Activated CD4-positive, alpha-beta memory T cell treated with anti-CD3 and anti-CD28 coated beads for 36 hours (primary cell): ENCODE measurements at regions of chr1 and their contacts with region 1.

Region 1: GRCh38 chr1:153990468-153991150 is at the start of gene RPS27:
- DNase-seq: peak; percentile 93
- H3K4me3 Mint-ChIP-seq: peak within 1 kb of the TSS; percentile 97
- H3K27ac Mint-ChIP-seq: peak within 1 kb of the TSS; percentile 99
- H3K4me1 Mint-ChIP-seq: peaks cover 45% of the 10 kb centered on the region
- H3K27me3 Mint-ChIP-seq: peaks cover 3% of the 10 kb centered on the region
- total RNA-seq, gene RPS27: 1,861 to 1,992 TPM

Region 2: GRCh38 chr1:153670859-153671627 is 319.6 kb before region 1 on chr1 and contains the start of gene ILF2:
- CTCF ChIA-PET with region 1: interaction called, 7 read pairs
- POLR2A ChIA-PET with region 1: interaction called, 3 read pairs
- intact Hi-C with region 1: loop called (anchors 2 kb)
- DNase-seq: peak; percentile 99
- H3K4me3 Mint-ChIP-seq: no peak within 1 kb of the TSS
- H3K27ac Mint-ChIP-seq: no peak within 1 kb of the TSS
- H3K4me1 Mint-ChIP-seq: peaks cover 31% of the 10 kb centered on the region
- H3K27me3 Mint-ChIP-seq: no peaks in the 10 kb centered on the region
- total RNA-seq, gene ILF2: 315 to 323 TPM

Region 3: DNA sequence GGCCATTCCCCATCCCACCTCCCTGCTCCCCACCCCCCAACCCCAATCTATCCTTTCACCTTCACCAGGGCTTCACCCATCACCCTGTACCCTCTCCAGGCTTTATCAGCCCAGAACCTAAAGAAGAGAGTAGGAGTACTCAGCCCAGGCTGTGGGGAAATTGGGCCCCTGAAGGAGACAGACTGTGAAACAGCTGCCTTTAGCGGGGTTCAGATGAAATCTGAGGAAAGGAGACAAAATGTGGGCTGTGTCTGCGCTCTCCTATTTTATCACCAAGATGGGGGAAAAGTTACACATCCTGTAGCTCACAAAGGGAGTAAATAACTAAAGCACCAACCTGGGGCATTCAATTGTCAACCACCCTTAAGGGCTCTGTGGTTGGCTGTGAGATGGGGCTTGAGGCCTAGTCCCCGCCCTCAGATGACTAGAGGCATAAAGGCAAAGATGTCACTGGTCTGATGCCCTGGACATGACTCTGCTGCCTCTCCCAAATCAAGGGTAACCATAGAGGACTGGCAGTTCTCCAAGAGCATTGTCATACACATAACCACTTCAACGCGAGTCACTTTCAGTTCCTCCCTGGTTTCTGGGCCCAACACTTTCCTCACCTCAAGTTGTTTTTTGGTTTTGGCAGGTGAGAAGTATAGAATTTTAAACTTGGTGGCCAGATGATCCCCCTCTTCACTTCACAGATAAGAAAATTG is 185.4 kb before region 1 on chr1:
- CTCF ChIA-PET with region 1: interaction called, 3 read pairs
- POLR2A ChIA-PET with region 1: interaction called, 3 read pairs
- intact Hi-C with region 1: loop called (anchors 2 kb)
- DNase-seq: peak; percentile 87
- H3K4me3 Mint-ChIP-seq: peak overlapping the region; percentile 5
- H3K27ac Mint-ChIP-seq: peak overlapping the region; percentile 81
- H3K4me1 Mint-ChIP-seq: peaks cover 30% of the 10 kb centered on the region
- H3K27me3 Mint-ChIP-seq: no peaks in the 10 kb centered on the region

Region 4: DNA sequence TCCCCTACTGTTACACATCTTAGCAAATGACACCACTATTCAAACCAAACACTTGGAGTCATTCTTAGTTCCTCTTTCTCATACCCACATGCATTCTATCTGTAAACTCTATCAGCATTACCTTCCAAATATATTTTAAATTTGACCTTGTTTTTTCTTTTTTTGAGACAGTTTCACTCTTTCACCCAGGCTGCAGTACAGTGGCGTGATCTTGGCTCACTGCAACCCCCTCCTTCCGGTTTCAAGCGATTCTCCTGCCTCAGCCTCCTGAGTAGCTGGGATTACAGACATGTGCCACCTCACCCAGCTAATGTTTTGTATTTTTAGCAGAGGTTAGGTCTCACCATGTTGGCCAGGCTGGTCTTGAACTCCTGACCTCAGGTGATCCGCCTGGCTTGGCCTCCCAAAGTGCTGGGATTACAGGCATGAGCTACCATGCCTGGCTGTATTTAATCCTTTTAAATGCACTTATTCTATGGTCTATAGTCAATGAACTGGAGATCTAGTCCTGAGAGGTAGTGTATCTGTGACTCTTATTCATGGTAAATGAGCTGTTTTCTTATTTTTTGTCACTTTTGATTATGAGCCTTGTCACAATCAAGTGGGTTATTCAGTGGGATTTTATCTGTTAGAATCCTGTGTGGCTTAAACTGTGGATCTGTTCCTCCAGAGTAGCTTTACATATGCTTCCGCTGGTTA is 141.0 kb before region 1 on chr1:
- CTCF ChIA-PET with region 1: no interaction called
- POLR2A ChIA-PET with region 1: no interaction called
- intact Hi-C with region 1: no loop called
- DNase-seq: peak; percentile 56
- H3K4me3 Mint-ChIP-seq: no peak overlapping the region
- H3K27ac Mint-ChIP-seq: peak overlapping the region; percentile 83
- H3K4me1 Mint-ChIP-seq: peaks cover 35% of the 10 kb centered on the region
- H3K27me3 Mint-ChIP-seq: no peaks in the 10 kb centered on the region

Region 5: DNA sequence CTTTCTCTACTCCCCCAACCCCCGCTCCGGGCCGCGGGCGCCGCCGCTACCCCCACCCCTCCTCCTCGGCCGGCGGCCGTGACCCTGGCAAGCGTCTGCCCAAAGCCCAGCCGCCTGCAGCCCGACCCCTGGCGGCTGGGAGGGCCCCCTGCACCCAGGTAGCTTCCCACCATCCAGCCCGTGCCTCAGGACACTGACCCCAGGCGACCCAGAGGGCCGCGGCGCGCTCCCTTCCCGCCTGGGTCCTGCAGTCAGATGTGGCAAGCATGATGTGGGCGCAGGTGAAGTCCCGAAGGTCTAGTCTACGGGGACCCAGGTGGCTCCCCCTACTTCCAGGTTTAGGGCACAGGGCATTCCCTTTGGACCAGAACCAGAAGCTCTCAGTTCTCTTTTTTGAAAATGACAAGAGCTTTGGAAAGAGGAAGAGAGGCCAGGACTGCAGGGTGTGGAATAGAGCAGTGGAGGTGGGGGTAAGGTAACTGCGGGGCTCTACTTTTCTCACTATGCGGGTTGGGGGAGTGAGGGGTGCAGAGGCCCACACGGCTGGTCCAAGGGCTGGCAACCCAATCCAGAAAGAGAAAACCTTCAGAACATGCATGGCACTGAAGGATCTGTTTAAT is 43.9 kb before region 1 on chr1 and contains the start of gene DENND4B:
- CTCF ChIA-PET with region 1: interaction called, 24 read pairs
- POLR2A ChIA-PET with region 1: interaction called, 23 read pairs
- intact Hi-C with region 1: no loop called
- DNase-seq: peak; percentile 83
- H3K4me3 Mint-ChIP-seq: peak within 1 kb of the TSS; percentile 92
- H3K27ac Mint-ChIP-seq: peak within 1 kb of the TSS; percentile 97
- H3K4me1 Mint-ChIP-seq: peaks cover 25% of the 10 kb centered on the region
- H3K27me3 Mint-ChIP-seq: no peaks in the 10 kb centered on the region
- total RNA-seq, gene DENND4B: 98.1 to 108 TPM

Region 6: GRCh38 chr1:153977250-153978240 is 13.1 kb before region 1 on chr1 and contains the start of gene JTB:
- CTCF ChIA-PET with region 1: interaction called, 34 read pairs
- POLR2A ChIA-PET with region 1: interaction called, 23 read pairs
- intact Hi-C with region 1: loop called (anchors 1 kb)
- DNase-seq: peak; percentile 92
- H3K4me3 Mint-ChIP-seq: peak within 1 kb of the TSS; percentile 90
- H3K27ac Mint-ChIP-seq: peak within 1 kb of the TSS; percentile 97
- H3K4me1 Mint-ChIP-seq: peaks cover 31% of the 10 kb centered on the region
- H3K27me3 Mint-ChIP-seq: no peaks in the 10 kb centered on the region
- total RNA-seq, gene JTB: 134 to 136 TPM

Region 7: GRCh38 chr1:154081386-154082126 is 90.9 kb after region 1 on chr1:
- CTCF ChIA-PET with region 1: no interaction called
- POLR2A ChIA-PET with region 1: no interaction called
- intact Hi-C with region 1: no loop called
- DNase-seq: no peak
- H3K4me3 Mint-ChIP-seq: no peak overlapping the region
- H3K27ac Mint-ChIP-seq: no peak overlapping the region
- H3K4me1 Mint-ChIP-seq: no peaks in the 10 kb centered on the region
- H3K27me3 Mint-ChIP-seq: peaks cover 5% of the 10 kb centered on the region

Region 8: DNA sequence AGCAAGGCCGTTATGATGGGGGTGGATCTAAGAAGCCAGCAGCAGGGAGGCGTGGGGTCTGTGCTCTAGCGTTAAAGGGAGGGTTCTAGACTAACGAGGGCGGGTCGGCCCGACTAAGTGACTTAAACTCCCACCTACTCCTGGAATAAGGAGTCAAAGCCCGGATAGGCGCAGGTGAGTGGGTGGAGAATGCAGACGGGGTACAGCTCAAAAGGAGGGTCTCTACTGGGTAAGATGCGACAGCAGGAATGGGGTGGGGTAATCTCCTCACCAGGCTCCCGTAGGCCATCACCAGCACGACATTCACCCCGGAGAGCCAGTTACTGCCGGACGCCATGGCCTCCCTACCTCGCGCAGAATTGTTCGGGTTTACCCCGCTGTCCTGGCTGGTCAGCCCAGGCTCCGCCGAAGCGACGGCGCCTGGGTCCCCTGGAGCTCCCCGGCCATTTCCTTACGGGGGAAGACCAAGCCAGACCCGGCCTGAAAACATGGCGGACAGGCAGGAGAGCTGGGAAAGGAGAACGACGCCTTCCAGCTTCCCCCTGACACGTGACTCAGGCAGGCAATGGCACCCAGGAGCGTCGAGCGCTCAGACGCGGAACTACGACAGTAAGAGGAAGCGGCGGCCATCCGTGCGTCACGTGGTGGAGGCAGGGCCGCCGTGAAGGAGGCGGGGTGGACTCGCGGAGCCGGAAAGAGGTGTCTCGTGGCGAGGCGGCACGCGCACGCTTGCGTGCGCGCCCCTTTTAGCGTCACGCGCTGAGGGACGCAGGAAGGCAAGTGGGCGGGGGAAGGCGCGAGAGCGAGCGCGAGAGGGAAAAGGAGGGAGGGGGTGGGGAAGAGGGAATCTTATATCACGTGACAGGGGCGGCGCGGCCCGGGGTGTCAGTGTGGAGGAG is 229.7 kb after region 1 on chr1 and contains the start of gene UBAP2L:
- CTCF ChIA-PET with region 1: no interaction called
- POLR2A ChIA-PET with region 1: no interaction called
- intact Hi-C with region 1: loop called (anchors 1 kb)
- DNase-seq: peak; percentile 99
- H3K4me3 Mint-ChIP-seq: peak within 1 kb of the TSS; percentile 90
- H3K27ac Mint-ChIP-seq: peak within 1 kb of the TSS; percentile 94
- H3K4me1 Mint-ChIP-seq: peaks cover 68% of the 10 kb centered on the region
- H3K27me3 Mint-ChIP-seq: peaks cover 2% of the 10 kb centered on the region
- total RNA-seq, gene UBAP2L: 180 to 183 TPM